ENCODE measurements at regions of chr10 and their contacts with region 1.

Region 1: DNA sequence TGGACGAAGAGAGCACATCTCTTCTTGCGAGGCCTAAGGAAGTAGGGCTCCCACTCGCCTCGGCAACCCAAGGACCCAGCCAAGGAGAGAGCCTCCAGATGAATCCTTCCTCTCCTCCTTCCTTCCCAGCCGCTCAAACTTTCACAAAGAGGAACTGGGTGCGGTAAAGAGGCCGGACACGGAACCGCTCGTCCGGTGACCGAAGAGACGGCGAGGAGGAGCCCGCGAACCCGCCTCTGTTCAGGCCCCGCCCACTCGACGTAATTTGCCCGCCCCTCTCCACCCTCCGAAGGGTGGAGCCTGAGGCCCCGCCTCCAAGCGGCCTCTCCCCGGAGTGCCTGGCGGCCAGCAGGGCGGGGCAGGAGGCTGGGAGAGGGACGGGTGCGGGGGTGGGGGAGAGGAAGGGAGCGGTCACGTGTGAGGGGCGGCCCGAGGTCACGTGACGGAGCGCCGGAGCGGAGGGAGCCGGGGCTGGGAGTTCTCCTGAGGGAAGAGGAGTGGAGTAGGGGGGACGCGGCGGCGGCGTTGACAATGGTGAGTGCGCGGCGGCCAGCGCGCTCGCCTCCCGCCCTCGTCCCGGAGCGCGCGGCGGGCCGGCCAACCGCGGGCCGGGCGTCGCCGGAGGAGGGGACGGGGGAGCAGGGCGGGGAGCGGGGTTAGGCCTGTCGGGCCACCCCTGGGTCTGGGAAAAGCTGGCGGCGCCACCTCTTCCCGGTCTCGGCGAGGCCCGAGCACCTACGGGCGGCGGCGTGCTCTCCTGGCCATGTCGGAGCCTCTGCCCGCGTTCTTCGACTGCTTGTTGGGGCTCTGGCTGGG is at the start of gene VPS26A:
- DNase-seq: peak; percentile 97 to 99 (median 99)
- H3K4me3 ChIP-seq: peak within 1 kb of the TSS; percentile 94 to 98 (median 97)
- H3K4me3 Mint-ChIP-seq: peak within 1 kb of the TSS; percentile 87 to 91
- H3K27ac ChIP-seq: peak within 1 kb of the TSS; percentile 95 to 97
- H3K27ac Mint-ChIP-seq: peak within 1 kb of the TSS; percentile 97 to 99 (median 98)
- H3K4me1 ChIP-seq: peaks cover 26 to 27% of the 10 kb centered on the region in 2 donors
- H3K4me1 Mint-ChIP-seq: peaks cover 24% of the 10 kb centered on the region
- H3K27me3 ChIP-seq: no peaks in the 10 kb centered on the region
- H3K27me3 Mint-ChIP-seq: no peaks in the 10 kb centered on the region
- CTCF ChIP-seq: no peak
- polyA plus RNA-seq, gene VPS26A: 10.1 to 58.3 (median 42.1) TPM

Region 2: DNA sequence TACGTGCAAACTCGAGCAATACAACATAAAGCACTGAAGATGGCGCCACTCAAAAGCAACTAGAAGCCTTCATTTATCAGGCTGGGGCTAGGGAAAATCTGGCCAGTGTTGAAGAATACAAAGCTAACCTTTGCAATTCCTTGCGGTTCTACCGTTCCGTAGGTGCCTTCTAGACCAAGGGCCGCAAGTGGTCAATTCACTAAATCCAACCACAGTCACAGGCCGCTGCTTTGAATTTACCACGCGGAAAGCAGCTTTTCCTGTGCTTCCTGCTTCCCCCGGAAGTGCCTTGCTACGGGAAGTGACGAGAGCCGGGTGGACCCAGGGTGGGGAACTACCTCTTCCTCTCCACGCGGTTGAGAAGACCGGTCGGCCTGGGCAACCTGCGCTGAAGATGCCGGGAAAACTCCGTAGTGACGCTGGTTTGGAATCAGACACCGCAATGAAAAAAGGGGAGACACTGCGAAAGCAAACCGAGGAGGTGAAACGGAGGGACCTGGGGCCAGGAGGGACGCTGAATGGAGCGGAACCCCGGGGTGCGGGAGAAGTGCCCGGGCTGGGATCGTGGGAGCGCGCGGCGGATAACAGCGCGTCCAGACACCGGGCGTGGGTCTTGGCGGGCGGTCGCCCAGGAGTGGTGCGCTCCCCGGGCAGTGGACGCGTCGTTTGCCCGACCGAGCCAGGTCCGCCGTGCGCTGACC is 168.0 kb before region 1 on chr10 and contains the start of gene DDX21:
- intact Hi-C with region 1: loop called in 1 of 2 experiments (anchors 5 kb)
- DNase-seq: peak; percentile 90 to 93 (median 91)
- H3K4me3 ChIP-seq: peak within 1 kb of the TSS; percentile 85 to 96 (median 89)
- H3K4me3 Mint-ChIP-seq: peak within 1 kb of the TSS; percentile 99 to 100
- H3K27ac ChIP-seq: peak within 1 kb of the TSS; percentile 95 to 99
- H3K27ac Mint-ChIP-seq: peak within 1 kb of the TSS; percentile 99 to 100 (median 100)
- H3K4me1 ChIP-seq: peaks cover 22 to 23% of the 10 kb centered on the region in 2 donors
- H3K4me1 Mint-ChIP-seq: peaks cover 26% of the 10 kb centered on the region
- H3K27me3 ChIP-seq: no peaks in the 10 kb centered on the region
- H3K27me3 Mint-ChIP-seq: peaks cover 0 to 3% (median 2%) of the 10 kb centered on the region in 3 donors
- CTCF ChIP-seq: peak; percentile 68
- polyA plus RNA-seq, gene DDX21: 9.8 to 39.3 (median 13.6) TPM

Region 3: DNA sequence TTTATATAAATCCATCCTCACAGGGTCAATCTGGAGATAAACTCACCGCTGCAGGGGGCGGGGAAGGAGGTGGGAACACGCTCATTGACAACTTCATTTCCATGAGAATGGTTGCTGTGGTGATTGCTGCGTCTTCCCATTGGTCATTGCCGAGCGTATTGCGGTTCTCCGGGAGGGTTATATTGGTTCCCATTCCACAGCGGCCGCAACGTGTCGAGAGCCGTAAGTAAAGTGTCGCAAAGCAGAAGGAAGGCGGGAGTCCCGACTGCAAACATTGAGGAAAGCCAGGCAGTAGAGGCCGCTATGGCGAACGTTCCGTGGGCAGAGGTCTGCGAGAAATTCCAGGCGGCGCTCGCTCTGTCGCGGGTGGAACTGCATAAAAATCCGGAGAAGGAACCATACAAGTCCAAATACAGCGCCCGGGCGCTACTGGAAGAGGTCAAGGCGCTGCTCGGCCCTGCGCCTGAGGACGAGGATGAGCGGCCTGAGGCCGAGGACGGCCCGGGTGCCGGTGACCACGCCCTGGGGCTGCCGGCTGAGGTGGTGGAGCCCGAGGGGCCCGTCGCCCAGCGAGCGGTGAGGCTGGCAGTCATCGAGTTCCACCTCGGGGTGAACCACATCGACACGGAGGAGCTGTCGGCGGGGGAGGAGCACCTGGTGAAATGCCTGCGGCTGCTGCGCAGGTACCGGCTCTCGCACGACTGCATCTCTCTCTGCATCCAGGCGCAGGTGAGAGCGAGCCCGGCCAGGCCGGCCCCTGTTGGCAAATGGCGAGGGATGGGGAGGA is 135.2 kb before region 1 on chr10 and contains the start of gene KIFBP:
- intact Hi-C with region 1: loop called in 1 of 2 experiments (anchors 10 kb)
- DNase-seq: peak; percentile 88 to 92 (median 90)
- H3K4me3 ChIP-seq: peak within 1 kb of the TSS; percentile 67 to 97 (median 75)
- H3K4me3 Mint-ChIP-seq: peak within 1 kb of the TSS; percentile 98
- H3K27ac ChIP-seq: peak within 1 kb of the TSS; percentile 34 to 72
- H3K27ac Mint-ChIP-seq: peak within 1 kb of the TSS; percentile 86 to 96 (median 90)
- H3K4me1 ChIP-seq: peaks cover 21% of the 10 kb centered on the region in 2 donors
- H3K4me1 Mint-ChIP-seq: peaks cover 35% of the 10 kb centered on the region
- H3K27me3 ChIP-seq: no peaks in the 10 kb centered on the region
- H3K27me3 Mint-ChIP-seq: peaks cover 0 to 2% (median 0%) of the 10 kb centered on the region in 3 donors
- CTCF ChIP-seq: peak; percentile 51
- polyA plus RNA-seq, gene KIFBP: 0.52 to 4.0 (median 1.4) TPM

Region 4: GRCh38 chr10:69051303-69051702 is 72.7 kb before region 1 on chr10:
- intact Hi-C with region 1: no loop called
- DNase-seq: peak; percentile 83 to 95 (median 89)
- H3K4me3 ChIP-seq: peak overlapping the region in 1 of 3 experiments; percentile 30
- H3K4me3 Mint-ChIP-seq: peak overlapping the region; percentile 48 to 54
- H3K27ac ChIP-seq: peak overlapping the region; percentile 82 to 88
- H3K27ac Mint-ChIP-seq: peak overlapping the region; percentile 96 to 100 (median 100)
- H3K4me1 ChIP-seq: peaks cover 96 to 99% of the 10 kb centered on the region in 2 donors
- H3K4me1 Mint-ChIP-seq: peaks cover 93% of the 10 kb centered on the region
- H3K27me3 ChIP-seq: no peaks in the 10 kb centered on the region
- H3K27me3 Mint-ChIP-seq: peaks cover 0 to 7% (median 0%) of the 10 kb centered on the region in 3 donors
- CTCF ChIP-seq: no peak

Region 5: GRCh38 chr10:69179743-69180524 is 56.0 kb after region 1 on chr10 and contains the start of gene SUPV3L1:
- intact Hi-C with region 1: loop called in 1 of 2 experiments (anchors 10 kb)
- DNase-seq: peak; percentile 93 to 96 (median 95)
- H3K4me3 ChIP-seq: peak within 1 kb of the TSS; percentile 92
- H3K4me3 Mint-ChIP-seq: peak within 1 kb of the TSS; percentile 90 to 92
- H3K27ac ChIP-seq: peak within 1 kb of the TSS; percentile 82 to 96
- H3K27ac Mint-ChIP-seq: peak within 1 kb of the TSS; percentile 99 to 100 (median 99)
- H3K4me1 ChIP-seq: peaks cover 18 to 22% of the 10 kb centered on the region in 2 donors
- H3K4me1 Mint-ChIP-seq: peaks cover 18% of the 10 kb centered on the region
- H3K27me3 ChIP-seq: no peaks in the 10 kb centered on the region
- H3K27me3 Mint-ChIP-seq: peaks cover 0 to 2% (median 0%) of the 10 kb centered on the region in 3 donors
- CTCF ChIP-seq: no peak
- polyA plus RNA-seq, gene SUPV3L1: 6.8 to 18.8 (median 7.3) TPM

Region 6: DNA sequence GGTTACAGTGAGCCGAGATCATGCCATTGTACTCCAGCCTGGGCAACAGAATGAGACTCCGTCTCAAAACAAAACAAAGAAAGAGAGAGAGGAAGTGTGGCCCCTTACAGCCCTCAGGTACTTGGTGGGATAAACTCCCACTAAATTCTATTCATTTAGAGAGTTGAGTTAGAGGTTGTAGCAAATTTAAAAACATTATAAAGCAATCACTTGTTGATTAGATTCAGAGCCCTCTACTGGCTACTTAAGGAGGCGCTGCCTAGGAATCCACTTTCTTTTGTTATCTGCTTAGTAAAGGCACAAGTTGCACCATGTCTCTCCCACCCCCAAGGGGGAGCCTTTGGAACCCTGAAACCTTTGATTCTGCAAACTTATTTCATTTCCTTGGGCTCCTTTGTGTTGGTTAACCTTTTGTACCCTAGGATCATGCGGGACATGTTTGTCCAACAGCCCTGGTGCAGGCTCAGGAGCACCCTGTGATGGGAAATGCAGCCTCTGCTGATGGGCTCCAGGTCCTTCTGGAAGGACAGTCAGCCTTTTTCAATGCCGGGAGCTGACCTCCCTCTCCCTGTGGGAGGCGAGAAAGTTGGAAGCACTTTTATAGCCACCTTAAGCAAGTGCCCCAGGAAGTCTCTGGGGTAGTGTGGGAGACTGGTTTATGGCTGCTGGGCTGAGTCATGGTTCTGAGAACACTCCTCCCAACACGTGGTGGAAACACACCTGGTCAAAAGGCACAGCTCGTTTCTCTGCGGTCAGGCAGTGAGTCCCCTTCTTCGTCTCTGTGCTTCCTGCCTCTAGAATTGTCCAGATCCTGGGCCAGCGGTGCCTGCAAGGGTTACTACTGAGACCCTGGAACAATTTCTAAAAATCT is 98.4 kb after region 1 on chr10:
- intact Hi-C with region 1: no loop called
- DNase-seq: peak; percentile 20 to 56 (median 46)
- H3K4me3 ChIP-seq: no peak overlapping the region
- H3K4me3 Mint-ChIP-seq: no peak overlapping the region
- H3K27ac ChIP-seq: no peak overlapping the region
- H3K27ac Mint-ChIP-seq: peak overlapping the region in 1 of 7 donors; percentile 21
- H3K4me1 ChIP-seq: no peaks in the 10 kb centered on the region
- H3K4me1 Mint-ChIP-seq: peaks cover 8% of the 10 kb centered on the region
- H3K27me3 ChIP-seq: no peaks in the 10 kb centered on the region
- H3K27me3 Mint-ChIP-seq: peaks cover 3 to 8% (median 5%) of the 10 kb centered on the region in 3 donors
- CTCF ChIP-seq: peak; percentile 79